ENCODE measurements at regions of chr22 and their contacts with region 1.

Region 1: GRCh38 chr22:40177738-40178416 is at the start of gene TNRC6B:
- DNase-seq: peak; percentile 48 to 60
- ATAC-seq: peak; percentile 95 to 97 (median 97)
- H3K4me3 ChIP-seq: peak within 1 kb of the TSS; percentile 80
- H3K27ac ChIP-seq: peak within 1 kb of the TSS; percentile 84
- H3K4me1 ChIP-seq: peaks cover 64% of the 10 kb centered on the region
- H3K27me3 ChIP-seq: no peaks in the 10 kb centered on the region
- CTCF ChIP-seq: no peak
- total RNA-seq, gene TNRC6B: 27.9 to 49.4 (median 32.6) TPM

Region 2: DNA sequence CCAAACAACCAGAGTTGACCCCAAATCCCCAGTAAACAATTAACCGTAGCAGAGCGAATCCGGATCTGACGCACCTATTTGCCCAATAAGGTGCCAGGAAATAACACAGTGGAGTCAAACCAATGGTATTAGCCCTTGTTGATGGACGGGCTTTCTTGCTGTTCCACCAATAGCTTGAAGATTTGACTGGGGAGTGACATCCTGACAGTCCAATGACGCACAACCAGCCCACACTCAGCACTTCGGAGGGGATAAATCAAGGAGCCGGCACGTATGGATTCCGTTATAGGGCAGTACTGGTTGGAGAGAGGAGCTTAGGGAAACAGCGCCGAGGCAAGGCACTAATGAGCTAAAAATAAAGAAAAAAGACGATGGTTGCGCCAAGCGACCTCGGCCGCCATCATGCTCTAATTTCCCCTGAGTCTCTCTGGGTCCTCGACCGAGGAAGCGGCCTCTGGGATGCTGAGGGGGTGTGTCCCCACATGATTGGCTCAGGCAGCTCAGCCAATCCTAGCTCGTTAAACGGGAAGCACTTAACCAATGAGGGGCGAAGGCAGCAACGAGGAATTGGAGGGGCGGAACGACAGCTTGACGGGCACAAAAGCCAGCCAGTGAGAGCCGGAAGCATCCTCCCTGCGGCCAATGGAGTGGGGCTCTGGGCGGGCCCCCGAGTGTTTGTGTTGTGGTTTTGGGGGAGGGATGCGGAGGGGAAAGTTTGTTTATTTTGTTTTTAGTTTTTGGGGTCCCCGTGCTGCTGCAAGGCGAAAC is 133.6 kb before region 1 on chr22:
- intact Hi-C with region 1: loop called in 1 of 2 experiments (anchors 5 kb)
- DNase-seq: peak; percentile 97 to 98
- ATAC-seq: peak; percentile 92 to 94 (median 93)
- H3K4me3 ChIP-seq: peak overlapping the region; percentile 86
- H3K27ac ChIP-seq: peak overlapping the region; percentile 91
- H3K4me1 ChIP-seq: peaks cover 32% of the 10 kb centered on the region
- H3K27me3 ChIP-seq: no peaks in the 10 kb centered on the region
- CTCF ChIP-seq: no peak

Region 3: DNA sequence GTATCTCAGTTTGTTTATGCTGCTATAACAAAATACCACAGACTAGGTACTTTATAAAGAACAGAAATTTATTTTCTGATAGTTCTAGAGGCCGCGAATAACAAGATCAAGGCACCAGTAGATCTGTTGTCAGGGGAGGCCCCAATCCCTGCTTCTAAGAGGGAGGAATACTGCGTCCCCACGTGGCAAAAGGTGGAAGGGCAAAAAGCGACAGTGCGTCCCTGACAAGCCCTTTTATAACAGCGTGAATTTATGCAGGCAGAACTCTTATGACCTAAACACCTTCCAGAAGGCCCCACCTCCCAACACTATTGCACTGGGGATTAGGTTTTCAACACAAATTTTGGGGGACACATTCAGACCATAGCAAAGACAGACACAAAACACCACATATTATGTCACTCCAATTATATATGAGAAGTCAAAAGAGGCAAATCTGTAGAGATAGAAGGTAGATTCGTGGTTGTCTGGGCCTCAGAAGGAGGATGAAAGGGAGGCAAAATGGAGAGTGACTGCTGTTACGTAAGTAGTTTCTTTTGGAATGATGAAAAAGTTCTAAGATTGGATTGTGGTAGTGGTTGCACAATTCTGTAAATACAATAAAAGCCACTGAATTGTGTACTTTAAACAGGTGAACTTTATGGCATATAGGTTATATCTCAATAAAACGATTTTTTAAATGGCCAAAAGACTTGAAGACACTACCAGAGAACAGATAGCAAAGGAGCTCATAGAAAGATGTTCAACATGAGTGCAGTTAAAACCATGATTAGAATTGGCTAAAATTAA is 30.3 kb before region 1 on chr22:
- intact Hi-C with region 1: no loop called
- DNase-seq: no peak
- ATAC-seq: no peak
- H3K4me3 ChIP-seq: no peak overlapping the region
- H3K27ac ChIP-seq: no peak overlapping the region
- H3K4me1 ChIP-seq: no peaks in the 10 kb centered on the region
- H3K27me3 ChIP-seq: no peaks in the 10 kb centered on the region
- CTCF ChIP-seq: no peak

Region 4: DNA sequence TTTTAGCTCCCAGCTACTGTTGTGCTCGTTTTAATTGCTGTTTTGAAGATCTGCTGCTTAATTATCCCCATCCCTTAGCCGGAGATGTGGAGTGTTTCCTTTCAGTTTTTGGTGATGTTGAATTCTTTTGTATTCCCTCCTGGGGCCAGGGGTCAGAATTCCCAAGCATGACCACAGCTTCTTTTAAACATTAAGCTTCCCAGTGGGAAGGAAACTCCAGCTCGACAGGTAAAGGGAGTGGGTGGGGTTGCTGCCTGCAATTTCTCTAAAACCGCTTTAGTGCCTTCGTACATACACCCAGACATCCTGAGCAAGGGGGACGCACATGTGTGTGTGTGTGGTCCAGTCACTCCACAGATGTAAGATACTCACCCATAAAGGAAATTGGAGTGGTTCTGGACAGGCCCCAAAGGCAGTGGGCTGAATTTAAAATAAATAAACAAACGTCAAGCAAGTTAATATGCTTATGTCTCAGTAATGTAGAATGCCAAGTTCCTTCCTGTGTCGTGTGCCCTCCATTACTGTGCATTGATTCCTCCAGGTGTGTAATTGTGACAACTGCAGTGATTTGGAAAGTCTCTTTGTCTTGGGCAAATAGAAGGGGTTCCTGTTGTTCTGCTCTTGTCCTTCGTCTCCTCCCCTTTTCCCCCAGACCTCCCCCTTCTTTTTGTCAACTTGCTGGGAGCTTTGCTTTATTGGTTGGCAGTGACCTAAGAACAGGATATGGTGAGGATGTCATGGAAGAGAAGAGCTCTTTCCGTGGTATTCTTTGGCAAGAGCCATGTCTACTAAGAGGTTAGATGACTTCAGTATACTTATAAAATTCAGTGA is 149.2 kb after region 1 on chr22:
- intact Hi-C with region 1: no loop called
- DNase-seq: no peak
- ATAC-seq: peak in 2 of 4 donors; percentile 22 to 42
- H3K4me3 ChIP-seq: no peak overlapping the region
- H3K27ac ChIP-seq: peak overlapping the region; percentile 2
- H3K4me1 ChIP-seq: no peaks in the 10 kb centered on the region
- H3K27me3 ChIP-seq: no peaks in the 10 kb centered on the region
- CTCF ChIP-seq: no peak

Region 5: DNA sequence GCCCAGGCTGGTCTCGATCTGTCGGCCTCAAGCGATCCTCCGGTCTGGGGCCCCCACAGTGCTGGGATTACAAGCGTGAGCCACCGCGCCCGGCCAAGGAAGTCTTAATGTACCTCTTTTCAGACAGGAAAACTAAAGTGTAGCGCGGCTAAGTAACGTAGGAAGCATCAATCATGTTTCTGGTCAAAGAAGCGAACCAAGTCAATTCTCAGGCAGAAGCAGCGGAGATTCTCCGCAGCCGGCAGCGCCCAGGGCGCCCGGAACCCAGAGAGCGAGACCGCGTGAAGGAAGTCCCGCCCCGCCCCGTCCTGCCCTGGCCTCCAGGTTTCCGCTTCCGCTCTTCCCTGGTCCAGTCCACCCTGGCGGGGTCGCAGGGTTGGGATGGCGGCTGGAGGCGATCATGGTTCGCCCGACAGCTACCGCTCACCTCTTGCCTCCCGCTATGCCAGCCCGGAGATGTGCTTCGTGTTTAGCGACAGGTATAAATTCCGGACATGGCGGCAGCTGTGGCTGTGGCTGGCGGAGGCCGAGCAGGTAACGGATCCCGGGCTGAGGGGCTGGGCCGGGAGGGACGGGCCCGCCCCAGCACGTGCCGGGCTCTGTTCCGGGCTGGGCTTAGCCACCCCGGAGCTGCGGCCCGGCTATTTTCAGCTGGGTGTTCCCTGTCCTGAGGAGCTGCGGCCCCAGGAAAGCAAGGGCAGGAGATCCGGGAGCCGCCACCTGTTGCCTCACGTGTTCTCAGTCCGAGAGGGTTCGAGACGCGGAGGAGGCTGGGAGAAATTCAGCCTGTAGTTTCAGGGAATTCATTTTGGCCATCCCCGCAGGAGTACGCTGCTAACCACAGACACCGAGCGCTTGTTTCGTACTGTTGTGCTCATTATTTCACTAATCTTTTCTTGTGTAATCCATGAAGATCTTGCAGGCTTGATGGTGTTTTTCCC is 168.6 kb after region 1 on chr22 and contains the start of gene ADSL:
- intact Hi-C with region 1: loop called in 1 of 2 experiments (anchors 5 kb)
- DNase-seq: peak; percentile 92 to 95
- ATAC-seq: peak; percentile 91 to 94 (median 92)
- H3K4me3 ChIP-seq: peak within 1 kb of the TSS; percentile 92
- H3K27ac ChIP-seq: peak within 1 kb of the TSS; percentile 97
- H3K4me1 ChIP-seq: peaks cover 53% of the 10 kb centered on the region
- H3K27me3 ChIP-seq: no peaks in the 10 kb centered on the region
- CTCF ChIP-seq: no peak
- total RNA-seq, gene ADSL: 114 to 170 (median 141) TPM

Measured in psoas muscle (tissue), 8 donors.